Activated CD4-positive, alpha-beta memory T cell treated with anti-CD3 and anti-CD28 coated beads for 36 hours (primary cell): ENCODE measurements at regions of chr19 and their contacts with region 1.

Region 1: DNA sequence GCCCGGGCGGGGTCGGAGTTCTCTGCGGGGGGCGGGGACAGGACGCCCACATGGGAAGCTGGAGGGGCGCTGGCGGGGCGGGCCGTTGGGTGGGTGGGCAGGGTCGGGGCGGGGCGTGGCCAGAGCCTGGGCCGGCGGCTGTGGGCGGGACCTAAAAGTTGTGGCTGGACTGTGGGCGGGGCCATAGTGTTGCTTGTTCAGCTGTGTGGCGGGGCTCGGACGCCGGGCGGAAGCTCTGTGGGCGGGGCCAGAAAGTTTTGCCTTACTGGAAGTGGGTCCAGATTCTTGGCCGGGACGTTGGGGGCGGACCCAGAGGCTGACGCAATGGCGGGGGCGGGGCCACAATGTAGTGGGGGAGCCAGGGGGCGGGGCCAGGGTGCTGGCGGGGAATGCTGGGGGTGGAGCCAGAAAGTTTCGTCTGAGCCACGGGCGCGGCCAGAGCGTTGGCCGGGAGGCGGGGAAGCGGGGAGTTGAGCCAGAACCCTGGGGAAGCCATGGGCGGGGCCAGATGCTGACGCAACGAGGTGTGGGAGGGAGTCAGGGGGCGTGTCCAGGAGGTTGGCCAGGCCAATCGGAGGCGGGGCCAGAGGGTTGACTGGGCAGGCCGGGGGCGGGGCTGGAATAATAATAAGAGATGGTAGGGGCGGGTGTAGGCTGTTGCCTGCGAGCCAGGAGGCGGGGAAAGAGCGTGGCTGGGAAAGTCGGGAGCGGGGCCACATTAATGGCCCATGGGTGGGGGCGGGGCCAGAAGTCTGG is 541 bp downstream of the CCDC9 start:
- DNase-seq: peak; percentile 100
- H3K4me3 Mint-ChIP-seq: peak overlapping the region; percentile 90
- H3K27ac Mint-ChIP-seq: peak overlapping the region; percentile 98
- H3K4me1 Mint-ChIP-seq: peaks cover 32% of the 10 kb centered on the region
- H3K27me3 Mint-ChIP-seq: no peaks in the 10 kb centered on the region

Region 2: DNA sequence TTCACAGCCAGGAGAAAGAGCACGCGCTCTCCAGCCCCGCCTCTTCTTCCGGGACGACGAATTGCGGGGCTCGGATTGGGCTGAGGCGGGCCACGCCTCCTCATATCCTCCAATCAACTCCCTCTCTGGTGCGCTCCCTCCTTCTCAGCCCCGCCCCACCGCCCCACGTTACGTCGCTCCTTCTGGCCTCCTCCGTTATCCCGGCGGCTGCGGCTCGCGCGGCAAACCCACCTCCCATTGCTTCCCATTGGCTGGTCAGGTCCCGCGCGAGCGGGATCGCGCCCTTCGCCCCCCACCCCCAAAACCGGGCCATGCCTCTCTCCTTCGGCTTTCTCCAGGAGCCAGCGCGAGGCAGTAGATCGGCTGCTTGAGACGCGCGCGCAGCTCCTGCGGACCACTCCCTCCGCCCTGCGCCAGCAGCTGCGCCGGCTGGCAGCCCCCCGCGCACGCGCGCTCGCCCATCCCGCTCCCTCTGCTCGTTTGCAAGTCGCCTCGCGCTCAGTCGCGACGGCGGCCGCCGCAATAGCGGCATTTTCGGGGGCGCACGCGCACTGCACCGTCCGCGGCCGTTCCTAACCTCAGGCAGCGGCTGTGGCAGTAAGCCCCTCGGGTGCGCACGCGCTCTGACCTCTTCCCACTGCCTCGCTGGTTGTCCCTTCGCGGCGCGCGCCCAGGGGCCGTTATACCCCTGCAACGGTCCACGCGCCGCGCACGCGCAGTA is 396.6 kb before region 1 on chr19:
- CTCF ChIA-PET with region 1: no interaction called
- POLR2A ChIA-PET with region 1: no interaction called
- intact Hi-C with region 1: loop called (anchors 1 kb)
- DNase-seq: peak; percentile 98
- H3K4me3 Mint-ChIP-seq: peak overlapping the region; percentile 85
- H3K27ac Mint-ChIP-seq: peak overlapping the region; percentile 91
- H3K4me1 Mint-ChIP-seq: peaks cover 17% of the 10 kb centered on the region
- H3K27me3 Mint-ChIP-seq: no peaks in the 10 kb centered on the region

Region 3: GRCh38 chr19:47210689-47211316 is 46.1 kb before region 1 on chr19:
- CTCF ChIA-PET with region 1: interaction called, 13 read pairs
- POLR2A ChIA-PET with region 1: interaction called, 3 read pairs
- intact Hi-C with region 1: no loop called
- DNase-seq: peak; percentile 85
- H3K4me3 Mint-ChIP-seq: no peak overlapping the region
- H3K27ac Mint-ChIP-seq: peak overlapping the region; percentile 85
- H3K4me1 Mint-ChIP-seq: peaks cover 12% of the 10 kb centered on the region
- H3K27me3 Mint-ChIP-seq: no peaks in the 10 kb centered on the region

Region 4: GRCh38 chr19:47273313-47273977 is 16.6 kb after region 1 on chr19:
- CTCF ChIA-PET with region 1: interaction called, 6 read pairs
- POLR2A ChIA-PET with region 1: interaction called, 38 read pairs
- intact Hi-C with region 1: loop called (anchors 1 kb)
- DNase-seq: peak; percentile 93
- H3K4me3 Mint-ChIP-seq: peak overlapping the region; percentile 92
- H3K27ac Mint-ChIP-seq: peak overlapping the region; percentile 97
- H3K4me1 Mint-ChIP-seq: peaks cover 21% of the 10 kb centered on the region
- H3K27me3 Mint-ChIP-seq: no peaks in the 10 kb centered on the region